Gastrocnemius medialis (tissue), 4 donors: ENCODE measurements at regions of chr9 and their contacts with region 1.

Region 1: GRCh38 chr9:2849941-2850340 is 6.0 kb upstream of the PUM3 start:
- DNase-seq: no peak
- ATAC-seq: no peak
- H3K4me3 ChIP-seq: no peak overlapping the region
- H3K27ac ChIP-seq: no peak overlapping the region
- H3K4me1 ChIP-seq: peaks cover 8 to 12% of the 10 kb centered on the region in 2 donors
- H3K27me3 ChIP-seq: no peaks in the 10 kb centered on the region
- CTCF ChIP-seq: no peak
- POLR2A ChIP-seq: no peak

Region 2: DNA sequence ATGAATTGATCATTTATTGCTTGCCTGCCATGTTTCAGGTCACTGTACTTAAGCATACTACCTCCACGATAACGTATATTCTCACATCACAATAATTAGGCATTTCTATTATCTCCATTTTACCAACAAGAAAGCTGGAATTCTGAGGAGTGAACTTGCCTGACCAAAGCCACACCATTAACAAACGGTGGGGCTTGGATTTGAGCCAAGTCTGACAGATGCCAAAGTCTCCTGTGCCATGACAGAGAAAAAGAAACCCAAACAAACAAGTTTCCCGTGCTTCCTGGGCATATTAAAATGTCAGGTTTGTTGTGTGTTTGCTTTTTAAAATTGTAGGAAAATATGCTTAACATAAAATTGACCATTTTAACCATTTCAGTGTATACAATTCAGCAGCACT is 173.5 kb before region 1 on chr9:
- in situ Hi-C with region 1: no loop called
- intact Hi-C with region 1: loop called (anchors 10 kb)
- DNase-seq: no peak
- ATAC-seq: no peak
- H3K4me3 ChIP-seq: no peak overlapping the region
- H3K27ac ChIP-seq: no peak overlapping the region
- H3K4me1 ChIP-seq: peaks cover 6 to 19% of the 10 kb centered on the region in 2 donors
- H3K27me3 ChIP-seq: no peaks in the 10 kb centered on the region
- CTCF ChIP-seq: no peak
- POLR2A ChIP-seq: no peak